GM12878 (cell line): ENCODE measurements at regions of chr11 and their contacts with region 1.

Region 1: GRCh38 chr11:111230122-111230465 is 15.4 kb upstream of the POU2AF2 start:
- DNase-seq: no peak
- ATAC-seq: peak; percentile 62
- H3K4me3 ChIP-seq: no peak overlapping the region
- H3K27ac ChIP-seq: no peak overlapping the region
- H3K4me1 ChIP-seq: peaks cover 10% of the 10 kb centered on the region
- H3K27me3 ChIP-seq: peaks cover 0 to 3% of the 10 kb centered on the region in 2 experiments; a peak in 1 of 4 replicates
- CTCF ChIP-seq: no peak
- EP300 ChIP-seq: no peak
- POLR2A ChIP-seq: no peak
- RAD21 ChIP-seq: no peak

Region 2: DNA sequence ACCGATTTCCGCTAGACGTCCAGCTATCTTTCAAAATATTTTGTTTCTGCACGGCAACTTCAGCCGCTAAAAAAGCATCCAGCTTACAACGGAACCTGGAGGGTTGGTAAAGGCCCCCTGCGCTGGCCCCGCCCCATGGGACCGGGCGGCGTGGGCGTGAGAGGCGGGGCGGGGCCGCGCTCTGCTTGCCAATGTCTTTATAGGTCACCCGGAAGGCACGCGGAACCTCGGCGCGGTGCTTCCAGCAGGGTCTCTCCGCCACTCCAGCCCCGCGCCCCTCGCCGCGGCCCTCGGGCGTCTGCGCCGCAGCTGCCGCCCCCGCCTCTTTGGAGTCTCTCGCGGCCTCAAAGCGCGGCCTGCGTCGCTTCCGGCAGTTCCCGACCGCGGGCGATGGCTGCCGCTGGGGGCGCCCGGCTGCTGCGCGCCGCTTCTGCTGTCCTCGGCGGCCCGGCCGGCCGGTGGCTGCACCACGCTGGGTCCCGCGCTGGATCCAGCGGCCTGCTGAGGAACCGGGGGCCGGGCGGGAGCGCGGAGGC is 800.3 kb before region 1 on chr11 and contains the start of gene FDX1:
- CTCF ChIA-PET with region 1: interaction called, 61 read pairs
- POLR2A ChIA-PET with region 1: no interaction called
- RAD21 ChIA-PET with region 1: interaction called, 7 read pairs
- SMC1A ChIA-PET with region 1: interaction called, 18 read pairs
- in situ Hi-C with region 1: no loop called
- intact Hi-C with region 1: no loop called
- DNase-seq: peak; percentile 23
- ATAC-seq: peak; percentile 92
- H3K4me3 ChIP-seq: peak within 1 kb of the TSS; percentile 67
- H3K27ac ChIP-seq: peak within 1 kb of the TSS; percentile 47
- H3K4me1 ChIP-seq: peaks cover 10% of the 10 kb centered on the region
- H3K27me3 ChIP-seq: no peaks in the 10 kb centered on the region
- CTCF ChIP-seq: peak; percentile 41 to 61 (median 42); a peak in 5 of 6 replicates
- EP300 ChIP-seq: no peak
- POLR2A ChIP-seq: peak; percentile 78
- RAD21 ChIP-seq: no peak
- polyA plus RNA-seq, gene FDX1: 3.9 to 9.6 TPM

Region 3: DNA sequence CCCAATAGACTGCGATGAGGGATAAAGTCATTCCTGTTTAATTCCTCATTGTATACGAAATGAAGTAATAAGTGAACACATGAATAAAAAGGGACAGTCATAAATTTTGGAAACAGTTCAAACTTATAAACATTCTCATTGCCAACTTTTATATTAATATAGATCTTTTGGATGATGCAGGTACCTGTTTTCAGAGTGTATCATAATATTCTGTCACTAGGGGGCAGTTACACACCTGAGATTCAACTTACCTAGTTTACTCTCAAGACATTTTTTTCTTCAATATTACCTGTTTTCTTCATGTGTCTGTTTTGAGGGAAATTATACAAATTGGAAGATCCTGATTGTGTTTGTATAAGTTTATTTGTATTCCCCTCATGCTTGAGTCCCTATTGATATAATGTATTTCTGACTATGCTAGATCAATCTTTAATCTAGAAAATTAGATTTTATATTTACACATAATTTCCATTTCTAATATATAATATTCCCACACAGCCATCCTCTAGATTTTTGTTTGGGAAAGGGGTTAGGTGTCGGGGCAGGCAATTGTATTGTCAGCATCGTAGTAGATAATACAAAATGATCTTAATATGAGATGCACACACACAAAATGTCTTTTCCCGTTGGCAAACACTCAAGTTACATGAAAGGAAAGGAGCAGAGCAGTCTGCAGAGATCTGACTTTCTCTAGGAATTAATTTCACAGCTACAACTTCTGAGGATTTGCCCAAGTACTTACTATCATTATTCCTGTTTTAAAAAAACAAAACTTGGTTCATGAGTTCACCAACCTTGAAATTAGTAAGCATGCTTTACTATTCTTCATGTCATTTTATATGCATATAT is 782.0 kb before region 1 on chr11:
- CTCF ChIA-PET with region 1: interaction called, 47 read pairs
- POLR2A ChIA-PET with region 1: no interaction called
- RAD21 ChIA-PET with region 1: interaction called, 7 read pairs
- SMC1A ChIA-PET with region 1: interaction called, 6 read pairs
- in situ Hi-C with region 1: loop called (anchors 5 kb)
- intact Hi-C with region 1: loop called (anchors 1 kb)
- DNase-seq: no peak
- ATAC-seq: peak; percentile 65
- H3K4me3 ChIP-seq: no peak overlapping the region
- H3K27ac ChIP-seq: no peak overlapping the region
- H3K4me1 ChIP-seq: peaks cover 3% of the 10 kb centered on the region; the same call in 1 of the 2 replicates
- H3K27me3 ChIP-seq: no peaks in the 10 kb centered on the region
- CTCF ChIP-seq: peak; percentile 38 to 52 (median 49); a peak in 4 of 6 replicates
- EP300 ChIP-seq: no peak
- POLR2A ChIP-seq: no peak
- RAD21 ChIP-seq: peak; percentile 68

Region 4: DNA sequence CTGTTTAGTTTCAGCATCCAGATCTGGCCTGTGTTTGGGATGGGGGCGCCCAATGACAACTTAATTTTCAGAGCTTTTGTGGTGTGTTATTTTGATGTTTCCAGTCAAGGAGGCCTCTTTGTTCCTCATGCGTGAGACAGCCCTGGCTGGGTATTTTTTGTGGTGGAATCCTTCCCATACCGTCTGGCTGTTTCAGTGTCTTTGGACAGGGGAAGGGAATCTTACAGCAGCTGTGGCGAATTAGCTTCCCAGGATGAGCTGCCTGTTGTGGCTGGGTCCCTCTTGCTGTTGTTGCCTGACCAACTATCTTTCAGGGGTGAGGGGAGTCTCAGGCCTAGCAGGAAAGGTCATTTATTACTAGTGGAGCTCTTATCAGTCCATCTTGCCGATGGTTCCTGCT is 656.7 kb before region 1 on chr11:
- CTCF ChIA-PET with region 1: interaction called, 3 read pairs
- POLR2A ChIA-PET with region 1: no interaction called
- RAD21 ChIA-PET with region 1: no interaction called
- SMC1A ChIA-PET with region 1: no interaction called
- in situ Hi-C with region 1: no loop called
- intact Hi-C with region 1: loop called (anchors 5 kb)
- DNase-seq: no peak
- ATAC-seq: no peak
- H3K4me3 ChIP-seq: no peak overlapping the region
- H3K27ac ChIP-seq: no peak overlapping the region
- H3K4me1 ChIP-seq: no peaks in the 10 kb centered on the region
- H3K27me3 ChIP-seq: no peaks in the 10 kb centered on the region; a peak in 1 of 4 replicates
- CTCF ChIP-seq: no peak
- EP300 ChIP-seq: no peak
- POLR2A ChIP-seq: no peak
- RAD21 ChIP-seq: no peak

Region 5: GRCh38 chr11:110968348-110969062 is 261.6 kb before region 1 on chr11:
- CTCF ChIA-PET with region 1: no interaction called
- POLR2A ChIA-PET with region 1: no interaction called
- RAD21 ChIA-PET with region 1: no interaction called
- SMC1A ChIA-PET with region 1: no interaction called
- in situ Hi-C with region 1: no loop called
- intact Hi-C with region 1: loop called (anchors 10 kb)
- DNase-seq: no peak
- ATAC-seq: no peak
- H3K4me3 ChIP-seq: no peak overlapping the region
- H3K27ac ChIP-seq: no peak overlapping the region
- H3K4me1 ChIP-seq: no peaks in the 10 kb centered on the region
- H3K27me3 ChIP-seq: no peaks in the 10 kb centered on the region
- CTCF ChIP-seq: no peak
- EP300 ChIP-seq: no peak
- POLR2A ChIP-seq: no peak
- RAD21 ChIP-seq: no peak

Region 6: DNA sequence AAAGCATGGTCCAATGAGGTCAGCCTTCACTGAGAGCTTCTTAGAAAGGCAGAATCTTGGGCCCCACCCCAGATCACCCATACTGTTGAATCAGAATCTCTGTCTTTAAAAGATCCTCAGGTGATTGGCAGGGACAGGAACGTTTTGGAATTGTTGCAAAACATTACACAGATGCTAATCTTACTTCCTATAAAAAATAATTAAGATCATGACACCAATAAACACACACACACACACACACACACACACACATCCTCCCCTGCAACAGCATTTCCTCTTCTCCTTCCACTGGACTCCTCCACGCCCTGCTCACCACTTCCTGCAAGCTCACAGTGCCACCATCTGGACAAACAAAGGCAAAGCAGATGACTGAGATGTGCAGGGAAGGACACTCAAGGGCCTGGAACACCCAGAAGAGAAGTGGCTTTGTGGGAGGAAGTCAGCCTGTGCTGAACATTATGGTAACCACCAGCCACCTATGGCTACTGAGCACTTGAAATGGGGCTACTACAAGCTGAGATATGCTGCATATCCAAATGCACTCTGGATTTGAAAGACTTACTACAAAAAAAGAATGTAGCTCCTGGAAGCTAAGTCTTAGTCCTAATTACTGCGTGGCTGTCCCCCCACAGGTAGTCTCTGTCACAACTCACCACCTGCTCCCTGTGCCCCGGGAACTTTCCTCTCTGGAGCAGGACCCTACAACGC is 216.5 kb after region 1 on chr11:
- CTCF ChIA-PET with region 1: interaction called, 3 read pairs
- POLR2A ChIA-PET with region 1: no interaction called
- RAD21 ChIA-PET with region 1: interaction called, 4 read pairs
- SMC1A ChIA-PET with region 1: interaction called, 5 read pairs
- in situ Hi-C with region 1: no loop called
- intact Hi-C with region 1: loop called (anchors 5 kb)
- DNase-seq: peak; percentile 76
- ATAC-seq: peak; percentile 98
- H3K4me3 ChIP-seq: no peak overlapping the region
- H3K27ac ChIP-seq: no peak overlapping the region
- H3K4me1 ChIP-seq: peaks cover 9% of the 10 kb centered on the region
- H3K27me3 ChIP-seq: no peaks in the 10 kb centered on the region
- CTCF ChIP-seq: peak; percentile 91 to 96 (median 94)
- EP300 ChIP-seq: no peak
- POLR2A ChIP-seq: no peak
- RAD21 ChIP-seq: peak; percentile 100

Region 7: GRCh38 chr11:111469200-111469599 is 239.1 kb after region 1 on chr11:
- CTCF ChIA-PET with region 1: no interaction called
- POLR2A ChIA-PET with region 1: no interaction called
- RAD21 ChIA-PET with region 1: no interaction called
- SMC1A ChIA-PET with region 1: no interaction called
- in situ Hi-C with region 1: no loop called
- intact Hi-C with region 1: no loop called
- DNase-seq: no peak
- ATAC-seq: no peak
- H3K4me3 ChIP-seq: no peak overlapping the region
- H3K27ac ChIP-seq: no peak overlapping the region
- H3K4me1 ChIP-seq: no peaks in the 10 kb centered on the region
- H3K27me3 ChIP-seq: no peaks in the 10 kb centered on the region; a peak in 2 of 4 replicates
- CTCF ChIP-seq: no peak
- EP300 ChIP-seq: no peak
- POLR2A ChIP-seq: no peak
- RAD21 ChIP-seq: no peak